GM12878 (cell line): ENCODE measurements at regions of chr12 and their contacts with region 1.

Region 1: GRCh38 chr12:91109148-91109564 is 2.1 kb downstream of the LUM start:
- DNase-seq: peak; percentile 15
- ATAC-seq: peak; percentile 90
- H3K4me3 ChIP-seq: no peak overlapping the region
- H3K27ac ChIP-seq: no peak overlapping the region
- H3K4me1 ChIP-seq: no peaks in the 10 kb centered on the region
- H3K27me3 ChIP-seq: no peaks in the 10 kb centered on the region
- CTCF ChIP-seq: peak; percentile 67 to 77 (median 74)
- EP300 ChIP-seq: no peak
- POLR2A ChIP-seq: no peak
- RAD21 ChIP-seq: peak; percentile 65

Region 2: DNA sequence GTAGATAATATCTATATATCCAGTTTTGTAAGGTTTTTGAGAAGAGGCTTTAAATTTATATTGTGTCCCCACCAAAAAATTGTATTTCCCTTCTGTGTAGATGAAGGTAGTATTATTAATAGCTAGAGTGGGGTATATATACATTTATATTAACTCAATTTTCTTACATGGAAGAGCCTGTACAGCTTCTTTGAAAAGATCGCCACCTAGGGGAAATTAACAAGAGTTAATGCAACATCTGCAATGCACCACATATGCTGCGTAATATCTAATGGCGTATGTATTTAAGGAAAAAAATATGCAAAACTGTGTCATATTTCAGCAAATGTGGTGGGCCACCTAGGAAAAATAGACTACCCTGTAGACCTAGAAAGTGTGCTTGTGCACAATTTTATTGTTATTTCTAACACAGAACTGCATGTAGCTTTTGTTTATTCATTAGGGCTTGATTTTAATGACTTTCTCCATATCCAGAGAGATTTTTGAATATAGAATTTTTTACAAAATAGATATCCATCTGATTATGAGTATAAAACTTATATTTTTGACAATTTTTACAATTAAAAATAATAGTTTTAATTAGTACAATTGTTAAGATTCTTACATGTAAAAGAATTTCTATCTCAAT is 168.2 kb before region 1 on chr12:
- CTCF ChIA-PET with region 1: interaction called, 50 read pairs
- POLR2A ChIA-PET with region 1: no interaction called
- RAD21 ChIA-PET with region 1: interaction called, 29 read pairs
- SMC1A ChIA-PET with region 1: interaction called, 23 read pairs
- in situ Hi-C with region 1: no loop called
- intact Hi-C with region 1: no loop called
- DNase-seq: no peak
- ATAC-seq: peak; percentile 88
- H3K4me3 ChIP-seq: no peak overlapping the region
- H3K27ac ChIP-seq: no peak overlapping the region
- H3K4me1 ChIP-seq: no peaks in the 10 kb centered on the region
- H3K27me3 ChIP-seq: no peaks in the 10 kb centered on the region
- CTCF ChIP-seq: peak; percentile 41 to 56 (median 55); a peak in 5 of 6 replicates
- EP300 ChIP-seq: no peak
- POLR2A ChIP-seq: no peak
- RAD21 ChIP-seq: peak; percentile 72

Region 3: DNA sequence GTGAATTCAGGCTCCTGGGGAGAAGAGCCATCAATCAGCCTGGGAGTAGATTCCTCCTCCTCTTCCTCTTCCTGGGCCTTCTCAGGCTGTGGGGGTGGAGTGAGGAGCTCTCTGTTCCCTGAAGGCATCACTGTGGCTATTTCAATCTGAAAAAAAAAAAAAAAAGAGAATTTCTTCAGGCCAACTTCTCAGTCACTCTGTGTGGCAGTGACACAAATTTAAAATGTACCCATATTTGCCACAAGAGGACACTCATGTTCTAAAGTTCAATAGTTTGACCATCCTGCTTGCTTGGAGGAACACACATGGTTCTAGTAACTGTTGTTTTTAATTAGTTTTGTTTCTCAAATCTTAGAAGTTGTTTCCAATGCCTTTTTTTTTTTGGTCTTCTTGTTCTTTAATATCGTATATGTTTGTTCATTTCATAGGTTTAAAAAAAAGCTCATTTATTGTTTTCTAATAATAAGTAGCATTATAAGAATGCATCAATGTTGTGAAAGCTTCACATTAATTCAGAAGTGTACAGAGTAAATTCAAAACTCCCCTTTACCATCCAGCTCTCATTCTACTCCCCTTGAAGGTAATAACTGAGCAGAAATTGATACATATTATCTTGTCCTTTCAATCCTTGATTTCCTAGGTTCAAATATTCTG is 130.9 kb before region 1 on chr12:
- CTCF ChIA-PET with region 1: interaction called, 88 read pairs
- POLR2A ChIA-PET with region 1: no interaction called
- RAD21 ChIA-PET with region 1: interaction called, 11 read pairs
- SMC1A ChIA-PET with region 1: interaction called, 21 read pairs
- in situ Hi-C with region 1: loop called (anchors 5 kb)
- intact Hi-C with region 1: loop called (anchors 1 kb)
- DNase-seq: peak; percentile 11
- ATAC-seq: peak; percentile 87
- H3K4me3 ChIP-seq: no peak overlapping the region
- H3K27ac ChIP-seq: no peak overlapping the region
- H3K4me1 ChIP-seq: no peaks in the 10 kb centered on the region
- H3K27me3 ChIP-seq: no peaks in the 10 kb centered on the region; a peak in 1 of 4 replicates
- CTCF ChIP-seq: peak; percentile 56 to 87 (median 58); a peak in 5 of 6 replicates
- EP300 ChIP-seq: no peak
- POLR2A ChIP-seq: no peak
- RAD21 ChIP-seq: peak; percentile 94

Region 4: GRCh38 chr12:91070936-91071335 is 38.2 kb before region 1 on chr12:
- CTCF ChIA-PET with region 1: interaction called, 11 read pairs
- POLR2A ChIA-PET with region 1: no interaction called
- RAD21 ChIA-PET with region 1: no interaction called
- SMC1A ChIA-PET with region 1: interaction called, 3 read pairs
- in situ Hi-C with region 1: no loop called
- intact Hi-C with region 1: no loop called
- DNase-seq: no peak
- ATAC-seq: no peak
- H3K4me3 ChIP-seq: no peak overlapping the region
- H3K27ac ChIP-seq: no peak overlapping the region
- H3K4me1 ChIP-seq: no peaks in the 10 kb centered on the region
- H3K27me3 ChIP-seq: no peaks in the 10 kb centered on the region; a peak in 1 of 4 replicates
- CTCF ChIP-seq: no peak
- EP300 ChIP-seq: no peak
- POLR2A ChIP-seq: no peak
- RAD21 ChIP-seq: no peak

Region 5: DNA sequence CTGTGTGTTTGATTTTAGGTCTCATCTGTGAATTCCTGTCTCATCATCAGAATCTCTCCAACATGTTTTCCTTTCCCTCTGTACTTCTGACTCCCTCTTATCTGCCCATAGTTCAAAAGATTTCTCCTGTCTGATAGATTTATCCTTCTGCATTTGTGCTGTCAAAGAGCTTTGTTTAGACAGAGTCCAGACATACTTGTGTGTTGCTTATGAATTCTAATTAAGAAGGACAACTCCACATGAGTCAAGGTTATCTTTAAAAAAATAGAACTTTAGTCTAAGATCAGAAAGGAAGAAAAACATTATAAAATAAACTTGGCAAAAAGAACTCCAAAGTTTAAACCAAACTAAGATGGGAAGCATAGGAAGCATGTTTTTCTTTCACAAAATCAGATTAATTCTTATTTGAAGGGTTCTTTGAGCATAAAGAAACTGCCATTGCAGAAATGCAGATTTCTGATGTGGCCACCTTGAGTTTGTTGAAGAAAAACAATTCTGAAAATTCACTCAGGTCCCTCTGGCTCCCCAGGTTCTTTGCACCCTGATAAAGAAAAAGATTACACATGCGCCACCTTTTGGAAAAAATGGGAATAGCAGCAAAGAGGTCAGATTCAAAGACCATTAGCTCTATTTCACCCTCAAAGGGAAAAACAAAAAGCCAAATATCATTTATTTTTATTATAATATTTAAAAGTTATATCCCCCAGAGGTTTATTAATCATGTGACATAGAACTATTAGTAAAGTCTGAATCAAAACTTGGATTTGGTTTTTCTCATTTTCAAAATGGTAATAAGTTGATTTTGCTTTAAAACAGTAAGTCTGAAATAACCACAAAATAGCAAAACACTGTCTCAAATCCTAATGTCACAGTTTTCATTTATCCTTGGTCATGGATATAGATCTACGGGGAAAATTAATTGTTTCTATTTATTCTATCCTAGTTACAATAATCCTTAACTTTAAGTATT is 217.2 kb after region 1 on chr12:
- CTCF ChIA-PET with region 1: interaction called, 12 read pairs
- POLR2A ChIA-PET with region 1: no interaction called
- RAD21 ChIA-PET with region 1: interaction called, 3 read pairs
- SMC1A ChIA-PET with region 1: interaction called, 3 read pairs
- in situ Hi-C with region 1: no loop called
- intact Hi-C with region 1: loop called (anchors 5 kb)
- DNase-seq: no peak
- ATAC-seq: peak; percentile 80
- H3K4me3 ChIP-seq: no peak overlapping the region
- H3K27ac ChIP-seq: no peak overlapping the region
- H3K4me1 ChIP-seq: no peaks in the 10 kb centered on the region
- H3K27me3 ChIP-seq: no peaks in the 10 kb centered on the region
- CTCF ChIP-seq: peak; percentile 61 to 76 (median 65)
- EP300 ChIP-seq: no peak
- POLR2A ChIP-seq: no peak
- RAD21 ChIP-seq: peak; percentile 69